Activated CD4-positive, alpha-beta T cell treated with anti-CD3 and anti-CD28 coated beads, Interleukin-2, amount 10 ng/mL, durations not matched to agents 24 days and 14 days (primary cell): ENCODE measurements at regions of chr11 and their contacts with region 1.

Region 1: DNA sequence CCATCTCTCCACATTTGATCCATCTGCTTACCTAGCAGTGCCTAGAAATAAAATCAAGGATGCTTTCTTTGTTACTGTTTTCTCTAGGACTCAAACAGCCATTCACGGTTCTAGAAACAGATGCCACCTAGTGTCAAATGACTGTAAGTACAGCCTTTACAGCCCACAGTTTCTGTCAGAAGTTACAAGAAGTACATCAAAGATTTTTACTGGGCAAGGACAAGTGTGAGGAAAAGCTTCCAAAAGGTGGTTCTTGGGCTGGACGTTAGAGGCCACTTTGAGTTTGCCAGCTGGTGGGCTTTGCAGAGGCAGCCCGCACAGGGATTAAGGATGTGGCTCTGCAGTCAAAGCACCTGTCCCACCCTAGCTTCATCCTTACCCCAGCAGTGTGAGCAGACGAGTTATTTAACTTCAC is 6.9 kb downstream of the KMT5B start:
- DNase-seq: peak; percentile 82
- H3K4me3 Mint-ChIP-seq: no peak overlapping the region
- H3K27ac Mint-ChIP-seq: no peak overlapping the region
- H3K4me1 Mint-ChIP-seq: peaks cover 27% of the 10 kb centered on the region
- H3K27me3 Mint-ChIP-seq: no peaks in the 10 kb centered on the region

Region 2: DNA sequence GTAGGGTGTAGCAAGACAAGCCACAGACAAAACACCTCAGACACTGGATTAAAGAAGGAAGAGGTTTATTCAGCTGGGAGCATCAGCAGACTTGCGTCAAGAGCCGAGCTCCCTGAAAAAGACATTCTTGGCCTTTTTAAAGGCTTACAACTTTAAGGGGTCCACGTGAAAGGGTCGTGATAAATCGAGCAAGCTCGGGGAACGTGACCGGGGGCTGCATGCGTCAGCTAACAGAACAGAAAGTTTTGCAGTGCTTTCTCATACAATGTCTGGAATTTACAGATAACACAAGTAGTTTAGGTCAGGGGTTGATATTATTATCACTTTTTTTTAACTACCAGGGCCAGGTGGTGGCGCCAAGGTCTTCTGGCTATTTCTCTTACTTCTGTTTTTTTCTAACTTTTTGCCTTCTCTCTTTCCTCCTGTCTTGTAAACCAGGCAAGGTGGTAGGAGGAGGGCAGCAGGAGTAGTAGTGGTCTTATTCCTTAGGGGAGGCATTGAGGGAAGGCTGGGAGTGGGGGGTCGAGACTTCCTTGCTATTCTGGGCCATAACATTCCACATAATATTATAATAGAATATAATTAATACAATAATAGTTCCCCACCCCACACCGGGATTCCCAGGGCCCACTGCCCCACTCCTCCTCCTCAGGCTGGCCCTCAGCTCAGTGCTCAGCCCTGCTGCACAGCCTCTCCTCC is 196.7 kb before region 1 on chr11:
- intact Hi-C with region 1: loop called (anchors 5 kb)
- DNase-seq: no peak
- H3K4me3 Mint-ChIP-seq: no peak overlapping the region
- H3K27ac Mint-ChIP-seq: no peak overlapping the region
- H3K4me1 Mint-ChIP-seq: peaks cover 10% of the 10 kb centered on the region
- H3K27me3 Mint-ChIP-seq: peaks cover 2% of the 10 kb centered on the region

Region 3: GRCh38 chr11:68142028-68142412 is 64.2 kb before region 1 on chr11:
- intact Hi-C with region 1: no loop called
- DNase-seq: peak; percentile 80
- H3K4me3 Mint-ChIP-seq: no peak overlapping the region
- H3K27ac Mint-ChIP-seq: peak overlapping the region; percentile 82
- H3K4me1 Mint-ChIP-seq: peaks cover 7% of the 10 kb centered on the region
- H3K27me3 Mint-ChIP-seq: peaks cover 5% of the 10 kb centered on the region

Region 4: GRCh38 chr11:68528630-68529029 is 322.4 kb after region 1 on chr11:
- intact Hi-C with region 1: no loop called
- DNase-seq: peak; percentile 73
- H3K4me3 Mint-ChIP-seq: peak overlapping the region; percentile 25
- H3K27ac Mint-ChIP-seq: peak overlapping the region; percentile 76
- H3K4me1 Mint-ChIP-seq: peaks cover 49% of the 10 kb centered on the region
- H3K27me3 Mint-ChIP-seq: no peaks in the 10 kb centered on the region